Dendritic cell treated with granulocyte-macrophage colony-stimulating factor and Interleukin-4, amounts not matched to agents 40 ng/mL and 50 ng/mL, for 4 days (primary cell): ENCODE measurements at regions of chr16 and their contacts with region 1.

Region 1: DNA sequence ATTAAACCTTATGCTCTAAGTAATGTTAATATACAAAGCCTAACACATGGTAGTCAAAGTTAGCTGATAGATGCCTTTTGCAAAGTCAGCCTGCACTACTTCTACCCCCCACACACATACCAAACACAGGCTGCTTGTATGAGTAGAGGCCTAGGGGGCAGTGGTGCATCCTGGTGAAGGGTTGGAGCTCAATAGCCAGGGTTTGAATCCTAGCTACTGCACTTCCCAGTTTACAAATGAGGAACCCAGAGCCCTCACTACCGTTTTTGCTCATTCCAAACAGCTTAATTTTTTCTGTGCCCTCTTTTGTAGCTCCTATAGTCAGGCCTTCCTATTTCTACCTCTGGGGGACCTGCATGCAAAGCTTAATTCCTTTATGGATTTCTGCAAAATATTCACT is 18.9 kb upstream of the HYDIN start:
- H3K4me3 Mint-ChIP-seq: no peak overlapping the region
- H3K27ac Mint-ChIP-seq: peak overlapping the region; percentile 65
- H3K4me1 Mint-ChIP-seq: peaks cover 63% of the 10 kb centered on the region
- H3K27me3 Mint-ChIP-seq: peaks cover 2% of the 10 kb centered on the region

Region 2: GRCh38 chr16:71172481-71173201 is 76.8 kb before region 1 on chr16:
- intact Hi-C with region 1: no loop called
- H3K4me3 Mint-ChIP-seq: no peak overlapping the region
- H3K27ac Mint-ChIP-seq: no peak overlapping the region
- H3K4me1 Mint-ChIP-seq: no peaks in the 10 kb centered on the region
- H3K27me3 Mint-ChIP-seq: peaks cover 1% of the 10 kb centered on the region

Region 3: GRCh38 chr16:71311553-71312158 is 62.3 kb after region 1 on chr16:
- intact Hi-C with region 1: loop called (anchors 2 kb)
- H3K4me3 Mint-ChIP-seq: no peak overlapping the region
- H3K27ac Mint-ChIP-seq: no peak overlapping the region
- H3K4me1 Mint-ChIP-seq: no peaks in the 10 kb centered on the region
- H3K27me3 Mint-ChIP-seq: peaks cover 17% of the 10 kb centered on the region